ENCODE measurements at regions of chr1 and their contacts with region 1.

Region 1: GRCh38 chr1:157652859-157653493 is 47.6 kb downstream of the FCRL3 start:
- DNase-seq: peak in 3 of 14 experiments; percentile 10 to 23 (median 23)
- ATAC-seq: no peak
- H3K4me3 ChIP-seq: no peak overlapping the region
- H3K4me3 Mint-ChIP-seq: no peak overlapping the region
- H3K27ac ChIP-seq: no peak overlapping the region
- H3K27ac Mint-ChIP-seq: no peak overlapping the region
- H3K4me1 ChIP-seq: no peaks in the 10 kb centered on the region
- H3K4me1 Mint-ChIP-seq: peaks cover 7% of the 10 kb centered on the region
- H3K27me3 ChIP-seq: no peaks in the 10 kb centered on the region
- H3K27me3 Mint-ChIP-seq: peaks cover 27% of the 10 kb centered on the region
- CTCF ChIP-seq: no peak

Region 2: DNA sequence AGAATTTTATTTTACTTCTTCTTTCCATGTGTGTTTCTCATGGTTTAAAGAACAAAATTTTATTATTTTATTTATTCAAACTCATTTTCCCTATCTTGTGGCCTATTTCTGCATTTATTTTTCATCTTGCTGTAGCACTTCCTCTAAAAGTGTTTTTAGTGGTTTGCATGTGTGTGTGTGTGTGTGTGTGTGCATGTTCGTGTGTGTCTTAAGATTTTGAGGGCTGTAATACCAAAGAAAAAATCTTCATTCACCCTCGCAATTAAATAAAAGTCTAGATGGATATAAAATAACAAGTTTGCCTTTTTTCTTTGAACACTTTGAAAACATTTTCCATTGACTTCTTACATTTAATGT is 72.2 kb after region 1 on chr1:
- CTCF ChIA-PET with region 1: no interaction called
- POLR2A ChIA-PET with region 1: no interaction called
- intact Hi-C with region 1: loop called in 1 of 2 experiments (anchors 2 kb)
- DNase-seq: peak in 4 of 14 experiments; percentile 19 to 60 (median 30)
- ATAC-seq: no peak
- H3K4me3 ChIP-seq: no peak overlapping the region
- H3K4me3 Mint-ChIP-seq: no peak overlapping the region
- H3K27ac ChIP-seq: no peak overlapping the region
- H3K27ac Mint-ChIP-seq: no peak overlapping the region
- H3K4me1 ChIP-seq: no peaks in the 10 kb centered on the region
- H3K4me1 Mint-ChIP-seq: peaks cover 10% of the 10 kb centered on the region
- H3K27me3 ChIP-seq: peaks cover 0 to 3% of the 10 kb centered on the region in 2 experiments
- H3K27me3 Mint-ChIP-seq: no peaks in the 10 kb centered on the region
- CTCF ChIP-seq: no peak

Region 3: GRCh38 chr1:157739229-157739901 is 86.4 kb after region 1 on chr1:
- CTCF ChIA-PET with region 1: no interaction called
- POLR2A ChIA-PET with region 1: no interaction called
- intact Hi-C with region 1: no loop called
- DNase-seq: no peak
- ATAC-seq: no peak
- H3K4me3 ChIP-seq: no peak overlapping the region
- H3K4me3 Mint-ChIP-seq: no peak overlapping the region
- H3K27ac ChIP-seq: no peak overlapping the region
- H3K27ac Mint-ChIP-seq: no peak overlapping the region
- H3K4me1 ChIP-seq: no peaks in the 10 kb centered on the region
- H3K4me1 Mint-ChIP-seq: no peaks in the 10 kb centered on the region
- H3K27me3 ChIP-seq: no peaks in the 10 kb centered on the region
- H3K27me3 Mint-ChIP-seq: peaks cover 4% of the 10 kb centered on the region
- CTCF ChIP-seq: no peak

Measured in CD4-positive, alpha-beta T cell (primary cell).